ENCODE measurements at regions of chr2 and their contacts with region 1.

Region 1: DNA sequence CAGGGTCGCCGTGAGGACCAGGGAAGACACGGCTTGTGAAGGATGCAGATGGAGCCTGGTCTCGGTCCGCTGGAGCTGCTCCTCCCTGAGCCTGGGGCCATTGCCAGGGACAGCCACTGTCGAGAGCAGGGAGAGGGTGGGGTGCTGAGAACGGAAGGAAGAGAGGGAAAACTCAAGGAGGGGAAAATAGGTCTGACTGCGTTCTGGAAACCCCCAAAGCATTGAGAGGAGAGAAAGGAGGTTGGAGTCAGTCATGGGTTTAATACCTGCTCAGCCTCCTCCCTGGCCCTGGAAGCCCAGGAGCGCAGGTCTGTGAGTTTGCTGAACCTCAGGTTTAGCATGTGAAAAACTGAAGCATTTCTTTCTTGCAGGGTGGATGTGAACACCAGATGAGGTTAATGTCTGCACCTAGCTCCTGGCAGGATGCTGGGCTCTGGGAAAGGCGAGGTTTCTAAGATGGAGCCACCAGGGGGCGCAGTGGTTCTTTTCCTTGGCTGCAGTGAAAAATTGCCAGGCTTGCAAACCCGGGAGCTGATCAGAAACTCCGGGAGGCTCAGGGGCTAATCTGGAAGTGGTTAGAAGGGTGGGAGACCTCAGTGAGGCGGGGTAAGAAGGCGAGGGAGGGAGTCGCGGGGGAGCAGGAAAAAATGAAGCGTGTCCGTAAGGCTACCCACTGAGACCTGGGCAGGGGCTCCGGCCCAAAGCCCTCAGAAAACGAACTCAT is 33.6 kb upstream of the RNF149 start:
- DNase-seq: peak; percentile 55
- ATAC-seq: no peak
- H3K4me3 Mint-ChIP-seq: no peak overlapping the region
- H3K27ac Mint-ChIP-seq: no peak overlapping the region
- H3K4me1 Mint-ChIP-seq: peaks cover 7% of the 10 kb centered on the region
- H3K27me3 Mint-ChIP-seq: peaks cover 6% of the 10 kb centered on the region
- CTCF ChIP-seq: peak; percentile 50

Region 2: DNA sequence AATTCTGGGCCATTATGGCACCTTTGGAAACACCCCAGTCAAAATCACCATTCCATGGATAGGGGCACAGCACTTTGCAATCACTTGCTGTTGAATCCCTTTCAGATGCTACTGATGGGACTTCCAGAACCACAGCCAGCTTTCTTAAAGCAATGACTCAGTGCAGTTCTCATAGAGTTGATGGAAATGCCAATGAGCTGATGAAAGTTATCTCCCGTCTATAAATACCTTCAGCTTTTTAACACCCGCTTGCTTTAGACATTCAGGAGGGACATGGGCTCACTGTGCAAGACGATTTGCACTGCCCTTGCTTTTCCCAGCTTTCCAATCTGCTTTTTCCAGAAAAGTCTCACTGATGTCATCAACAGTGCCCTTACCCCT is 406.7 kb before region 1 on chr2:
- CTCF ChIA-PET with region 1: no interaction called
- POLR2A ChIA-PET with region 1: no interaction called
- intact Hi-C with region 1: no loop called
- DNase-seq: no peak
- ATAC-seq: no peak
- H3K4me3 Mint-ChIP-seq: no peak overlapping the region
- H3K27ac Mint-ChIP-seq: no peak overlapping the region
- H3K4me1 Mint-ChIP-seq: no peaks in the 10 kb centered on the region
- H3K27me3 Mint-ChIP-seq: peaks cover 14% of the 10 kb centered on the region
- CTCF ChIP-seq: no peak

Region 3: GRCh38 chr2:101012706-101013181 is 329.3 kb before region 1 on chr2:
- CTCF ChIA-PET with region 1: interaction called, 6 read pairs
- POLR2A ChIA-PET with region 1: interaction called, 5 read pairs
- intact Hi-C with region 1: loop called (anchors 2 kb)
- DNase-seq: no peak
- ATAC-seq: no peak
- H3K4me3 Mint-ChIP-seq: no peak overlapping the region
- H3K27ac Mint-ChIP-seq: no peak overlapping the region
- H3K4me1 Mint-ChIP-seq: peaks cover 20% of the 10 kb centered on the region
- H3K27me3 Mint-ChIP-seq: no peaks in the 10 kb centered on the region
- CTCF ChIP-seq: peak; percentile 93

Region 4: DNA sequence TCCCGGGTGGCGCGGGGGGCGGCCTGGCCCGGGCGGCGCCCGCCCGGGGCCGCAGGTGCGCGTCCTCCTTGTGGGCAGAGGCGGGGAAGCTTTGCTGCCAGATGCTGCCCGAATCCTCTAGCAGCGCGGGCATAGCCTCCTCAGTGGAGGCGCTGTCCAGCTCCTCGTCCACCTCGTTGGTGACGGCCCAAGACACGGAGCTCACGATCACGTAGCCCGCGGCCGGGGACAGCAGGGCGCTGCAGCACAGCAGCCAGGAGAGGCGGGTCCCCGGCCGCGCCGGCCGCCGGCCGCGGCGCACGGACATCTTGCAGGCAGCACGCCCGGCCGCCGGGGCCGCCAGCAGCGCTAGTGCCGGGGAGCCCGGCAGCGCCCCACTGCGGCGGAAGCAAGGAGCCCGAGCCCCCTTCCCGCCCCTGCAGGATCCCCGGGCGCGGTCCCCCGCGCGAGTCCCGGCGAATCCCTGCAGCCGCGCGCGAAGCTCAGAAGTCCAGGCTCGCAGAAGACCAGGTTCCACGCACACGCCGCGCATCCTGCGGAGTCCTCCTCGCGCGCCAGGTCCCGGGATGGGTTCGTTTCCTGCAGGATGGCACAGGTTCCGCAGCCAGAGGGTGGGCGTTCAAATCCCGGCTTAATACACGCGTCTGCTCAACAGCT is 45.2 kb after region 1 on chr2 and contains the start of gene CREG2:
- CTCF ChIA-PET with region 1: interaction called, 13 read pairs
- POLR2A ChIA-PET with region 1: no interaction called
- intact Hi-C with region 1: loop called (anchors 1 kb)
- DNase-seq: peak; percentile 44
- ATAC-seq: peak; percentile 83
- H3K4me3 Mint-ChIP-seq: peak within 1 kb of the TSS; percentile 66
- H3K27ac Mint-ChIP-seq: no peak within 1 kb of the TSS
- H3K4me1 Mint-ChIP-seq: peaks cover 15% of the 10 kb centered on the region
- H3K27me3 Mint-ChIP-seq: peaks cover 45% of the 10 kb centered on the region
- CTCF ChIP-seq: no peak
- total RNA-seq, gene CREG2: not detected in 2 replicates

Region 5: GRCh38 chr2:101823347-101823791 is 481.3 kb after region 1 on chr2:
- CTCF ChIA-PET with region 1: interaction called, 51 read pairs
- POLR2A ChIA-PET with region 1: no interaction called
- intact Hi-C with region 1: no loop called
- DNase-seq: no peak
- ATAC-seq: peak; percentile 86
- H3K4me3 Mint-ChIP-seq: no peak overlapping the region
- H3K27ac Mint-ChIP-seq: peak overlapping the region; percentile 57
- H3K4me1 Mint-ChIP-seq: peaks cover 68% of the 10 kb centered on the region
- H3K27me3 Mint-ChIP-seq: no peaks in the 10 kb centered on the region
- CTCF ChIP-seq: no peak

Region 6: GRCh38 chr2:102449370-102449974 is 1107.4 kb after region 1 on chr2:
- CTCF ChIA-PET with region 1: no interaction called
- POLR2A ChIA-PET with region 1: no interaction called
- intact Hi-C with region 1: loop called (anchors 1 kb)
- DNase-seq: peak; percentile 21
- ATAC-seq: no peak
- H3K4me3 Mint-ChIP-seq: no peak overlapping the region
- H3K27ac Mint-ChIP-seq: no peak overlapping the region
- H3K4me1 Mint-ChIP-seq: no peaks in the 10 kb centered on the region
- H3K27me3 Mint-ChIP-seq: peaks cover 5% of the 10 kb centered on the region
- CTCF ChIP-seq: no peak

Measured in activated B cell treated with CpG ODN at 0.5 μM for 24 hours (primary cell).